ENCODE measurements at regions of chr9 and their contacts with region 1.

Region 1: DNA sequence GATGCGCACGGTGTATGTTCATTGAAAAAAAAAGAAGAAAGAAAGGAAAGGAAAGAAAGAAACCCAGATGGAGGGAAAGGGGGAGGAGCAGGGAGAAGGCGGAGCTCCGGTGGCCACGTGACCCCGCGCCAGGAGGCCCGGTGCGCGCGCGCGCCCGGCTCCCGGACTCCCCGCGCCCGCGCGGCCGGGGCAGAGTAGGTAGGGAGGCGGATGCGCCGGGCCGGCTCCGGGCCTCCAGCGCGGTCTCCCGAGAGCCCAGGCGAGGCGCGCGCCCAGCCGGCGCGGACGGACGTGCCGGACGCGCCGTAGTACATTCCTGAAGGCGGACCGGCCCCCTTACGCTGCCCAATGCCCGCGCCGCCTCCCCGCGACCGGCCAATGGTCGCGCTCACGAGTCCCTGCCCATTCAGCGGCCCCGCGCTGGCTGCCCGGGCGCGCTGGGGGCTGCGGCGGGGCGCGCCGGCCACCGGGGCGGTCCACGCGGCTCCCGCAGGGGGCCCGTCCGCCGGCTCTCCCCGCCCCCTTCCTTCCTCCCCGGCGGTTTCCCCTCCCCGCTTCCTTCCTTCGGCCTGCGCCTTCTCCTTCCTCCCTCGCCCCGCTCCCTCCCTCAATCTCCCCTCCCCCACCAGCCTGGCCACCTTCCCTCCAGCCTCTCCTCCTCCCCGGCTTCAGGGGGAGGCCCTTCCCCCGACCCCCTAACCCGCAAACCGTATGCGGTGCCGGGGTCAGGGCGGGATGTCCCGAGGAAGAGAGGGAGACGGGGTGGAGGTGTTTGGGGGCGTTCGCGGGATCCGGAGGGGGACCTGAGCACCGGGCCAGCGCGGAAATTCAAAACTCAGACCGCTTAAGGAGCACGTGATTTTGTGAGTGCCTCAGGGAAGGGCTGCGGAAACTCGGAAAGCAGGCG is 5.8 kb downstream of the PTCH1 start:
- DNase-seq: peak; percentile 77 to 97 (median 92)

Region 2: GRCh38 chr9:95317119-95317892 is 193.7 kb before region 1 on chr9 and contains the start of gene FANCC:
- intact Hi-C with region 1: loop called (anchors 5 kb)
- DNase-seq: peak; percentile 76 to 97 (median 94)

Region 3: GRCh38 chr9:95462249-95463147 is 48.5 kb before region 1 on chr9:
- intact Hi-C with region 1: loop called (anchors 5 kb)
- DNase-seq: peak; percentile 57 to 93 (median 80)

Region 4: DNA sequence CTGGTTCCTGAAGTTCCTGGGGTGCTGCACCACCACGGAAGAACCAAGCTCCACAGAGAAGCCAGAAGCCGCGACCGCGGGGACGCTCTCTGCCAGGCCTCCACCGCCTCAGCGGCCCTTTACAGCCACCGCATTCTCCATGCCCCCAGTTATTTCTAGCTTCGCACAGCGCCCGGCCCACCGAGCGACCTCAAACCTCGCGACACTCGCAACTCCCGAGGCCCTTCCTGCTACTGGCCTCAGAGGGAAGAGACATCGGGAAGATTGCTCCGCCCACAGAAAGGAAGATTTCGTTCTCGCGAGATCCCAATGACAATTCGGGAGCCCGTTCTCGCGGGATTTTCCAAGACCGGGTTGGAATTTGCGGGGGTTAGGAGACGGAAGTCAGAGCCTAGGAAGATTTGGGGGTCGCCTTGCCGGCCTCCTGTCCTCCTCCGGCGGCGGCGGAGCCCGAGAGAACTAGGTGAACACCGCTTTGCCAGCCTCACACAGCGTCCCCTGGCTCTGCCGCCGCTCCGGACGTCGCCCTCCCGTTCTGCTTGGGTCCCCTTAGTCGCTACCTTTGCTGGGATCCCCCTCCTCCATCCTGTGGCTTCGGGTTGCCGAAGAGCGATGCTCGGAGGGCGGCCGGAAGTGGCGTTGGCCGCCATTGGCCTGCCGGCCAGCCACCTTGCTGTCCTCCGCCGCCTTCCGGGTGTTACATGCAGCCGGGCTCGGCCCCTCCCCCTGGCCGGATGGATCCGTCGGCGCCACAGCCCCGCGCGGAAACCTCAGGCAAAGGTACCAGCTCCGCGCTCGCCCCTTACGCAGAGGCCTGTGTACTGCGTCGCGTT is 364.6 kb after region 1 on chr9 and contains the start of gene ERCC6L2:
- intact Hi-C with region 1: loop called (anchors 10 kb)
- DNase-seq: peak; percentile 81 to 97 (median 92)

Region 5: GRCh38 chr9:96116275-96117064 is 605.5 kb after region 1 on chr9:
- intact Hi-C with region 1: loop called (anchors 10 kb)
- DNase-seq: peak; percentile 83 to 97 (median 92)

Measured in head of caudate nucleus (tissue), 42 donors.